Activated CD4-positive, alpha-beta memory T cell treated with anti-CD3 and anti-CD28 coated beads for 36 hours (primary cell): ENCODE measurements at regions of chr4 and their contacts with region 1.

Region 1: GRCh38 chr4:7802093-7802726 is 137.5 kb downstream of the AFAP1 start:
- DNase-seq: peak; percentile 90
- H3K4me3 Mint-ChIP-seq: no peak overlapping the region
- H3K27ac Mint-ChIP-seq: peak overlapping the region; percentile 46
- H3K4me1 Mint-ChIP-seq: peaks cover 25% of the 10 kb centered on the region
- H3K27me3 Mint-ChIP-seq: no peaks in the 10 kb centered on the region

Region 2: GRCh38 chr4:7192252-7193029 is 609.8 kb before region 1 on chr4 and contains the start of gene SORCS2:
- CTCF ChIA-PET with region 1: interaction called, 5 read pairs
- POLR2A ChIA-PET with region 1: no interaction called
- intact Hi-C with region 1: loop called (anchors 5 kb)
- DNase-seq: peak; percentile 60
- H3K4me3 Mint-ChIP-seq: no peak within 1 kb of the TSS
- H3K27ac Mint-ChIP-seq: no peak within 1 kb of the TSS
- H3K4me1 Mint-ChIP-seq: peaks cover 2% of the 10 kb centered on the region
- H3K27me3 Mint-ChIP-seq: peaks cover 55% of the 10 kb centered on the region
- total RNA-seq, gene SORCS2: 0.07 TPM

Region 3: DNA sequence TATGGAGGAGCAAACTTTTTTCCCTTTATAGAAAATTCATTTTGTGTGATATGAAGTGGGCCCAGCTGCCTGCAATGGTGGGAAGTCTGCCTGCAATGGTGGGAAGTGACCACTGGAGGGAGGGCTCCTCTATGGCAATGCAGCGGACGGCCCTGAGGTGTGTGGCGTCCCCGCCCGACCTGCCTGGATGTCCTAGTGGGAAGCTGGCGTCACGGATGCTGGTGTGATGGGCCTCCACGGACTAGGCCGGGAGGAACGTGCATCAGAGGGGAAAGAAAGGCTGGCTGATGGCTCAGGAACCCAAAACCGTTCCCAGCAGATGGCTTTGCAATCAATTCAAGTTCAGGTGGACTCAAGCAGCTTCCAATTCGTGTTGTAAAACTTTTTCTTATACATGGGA is 40.5 kb before region 1 on chr4:
- CTCF ChIA-PET with region 1: interaction called, 104 read pairs
- POLR2A ChIA-PET with region 1: no interaction called
- intact Hi-C with region 1: loop called (anchors 1 kb)
- DNase-seq: peak; percentile 66
- H3K4me3 Mint-ChIP-seq: no peak overlapping the region
- H3K27ac Mint-ChIP-seq: peak overlapping the region; percentile 69
- H3K4me1 Mint-ChIP-seq: peaks cover 30% of the 10 kb centered on the region
- H3K27me3 Mint-ChIP-seq: no peaks in the 10 kb centered on the region

Region 4: GRCh38 chr4:7781366-7781765 is 20.8 kb before region 1 on chr4:
- CTCF ChIA-PET with region 1: interaction called, 11 read pairs
- POLR2A ChIA-PET with region 1: no interaction called
- intact Hi-C with region 1: loop called (anchors 1 kb)
- DNase-seq: peak; percentile 57
- H3K4me3 Mint-ChIP-seq: peak overlapping the region; percentile 15
- H3K27ac Mint-ChIP-seq: peak overlapping the region; percentile 93
- H3K4me1 Mint-ChIP-seq: peaks cover 88% of the 10 kb centered on the region
- H3K27me3 Mint-ChIP-seq: no peaks in the 10 kb centered on the region

Region 5: DNA sequence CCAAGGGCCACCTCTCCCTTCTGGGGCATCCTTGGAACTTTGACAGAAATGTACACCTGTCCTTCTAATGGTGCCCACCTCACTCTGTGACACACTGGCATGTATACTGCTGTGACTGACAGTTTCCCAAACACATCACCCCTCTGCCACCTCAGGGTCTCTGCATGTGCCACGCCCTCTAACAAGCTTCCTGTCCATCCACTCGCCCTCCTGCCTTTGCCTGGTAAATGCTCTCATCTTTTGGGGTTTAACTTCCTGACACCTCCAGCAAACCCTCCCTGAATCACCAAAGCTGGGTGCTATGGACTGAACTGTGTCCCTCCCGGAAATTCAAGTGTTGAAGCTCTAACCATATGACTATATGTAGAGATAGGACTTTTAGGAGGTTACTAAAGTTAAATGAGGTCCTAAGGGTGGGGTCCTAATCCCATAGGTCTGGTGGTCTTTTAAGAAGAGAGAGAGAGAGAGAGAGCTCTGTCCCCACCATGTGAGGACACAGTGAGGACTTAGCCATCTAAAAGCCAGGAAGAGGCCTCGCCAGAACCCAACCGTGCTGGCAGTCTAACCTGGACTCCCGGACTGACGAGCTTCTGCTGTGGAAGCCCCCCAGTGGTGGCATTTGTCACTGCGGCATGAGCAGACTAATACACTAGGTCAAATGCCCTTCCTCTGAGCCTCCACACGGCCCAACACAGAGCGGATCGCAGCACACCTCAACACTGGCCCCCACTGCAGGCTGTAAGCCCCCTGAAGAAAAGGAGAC is 41.8 kb after region 1 on chr4:
- CTCF ChIA-PET with region 1: interaction called, 110 read pairs
- POLR2A ChIA-PET with region 1: no interaction called
- intact Hi-C with region 1: loop called (anchors 2 kb)
- DNase-seq: peak; percentile 79
- H3K4me3 Mint-ChIP-seq: no peak overlapping the region
- H3K27ac Mint-ChIP-seq: peak overlapping the region; percentile 56
- H3K4me1 Mint-ChIP-seq: peaks cover 35% of the 10 kb centered on the region
- H3K27me3 Mint-ChIP-seq: no peaks in the 10 kb centered on the region

Region 6: DNA sequence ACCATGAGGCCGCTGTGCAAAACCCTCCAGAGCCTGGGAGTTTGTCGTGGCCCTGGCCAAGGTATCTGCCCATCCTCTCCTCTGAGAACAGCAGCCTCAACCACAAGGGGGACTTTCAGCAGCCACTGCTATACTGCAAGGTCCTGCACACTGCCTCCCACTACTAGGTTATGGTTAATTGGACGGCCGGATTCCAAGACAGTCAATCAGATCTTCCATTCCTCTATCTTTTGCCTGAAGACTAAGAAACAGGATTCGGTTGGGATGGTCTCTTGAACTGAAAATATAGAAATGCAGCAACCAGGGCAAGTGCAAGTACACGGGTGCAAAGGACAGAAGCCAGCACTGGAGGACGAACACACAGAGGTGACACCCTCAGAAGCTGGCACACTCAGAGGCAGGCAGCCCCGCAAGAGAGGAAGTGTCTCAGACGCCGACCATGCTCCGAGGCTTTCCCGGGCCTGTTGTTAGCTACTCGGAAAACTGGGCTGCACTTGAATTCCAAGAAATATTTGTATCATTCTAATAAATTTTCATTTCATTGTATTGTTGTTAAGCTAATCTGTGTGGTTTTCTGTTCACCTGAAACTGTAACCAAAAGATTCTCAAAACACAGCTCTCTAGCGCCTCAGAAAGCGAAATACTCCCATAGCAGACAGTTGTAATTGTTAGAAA is 74.1 kb after region 1 on chr4:
- CTCF ChIA-PET with region 1: interaction called, 78 read pairs
- POLR2A ChIA-PET with region 1: no interaction called
- intact Hi-C with region 1: loop called (anchors 5 kb)
- DNase-seq: peak; percentile 65
- H3K4me3 Mint-ChIP-seq: peak overlapping the region; percentile 58
- H3K27ac Mint-ChIP-seq: peak overlapping the region; percentile 66
- H3K4me1 Mint-ChIP-seq: peaks cover 62% of the 10 kb centered on the region
- H3K27me3 Mint-ChIP-seq: no peaks in the 10 kb centered on the region

Region 7: DNA sequence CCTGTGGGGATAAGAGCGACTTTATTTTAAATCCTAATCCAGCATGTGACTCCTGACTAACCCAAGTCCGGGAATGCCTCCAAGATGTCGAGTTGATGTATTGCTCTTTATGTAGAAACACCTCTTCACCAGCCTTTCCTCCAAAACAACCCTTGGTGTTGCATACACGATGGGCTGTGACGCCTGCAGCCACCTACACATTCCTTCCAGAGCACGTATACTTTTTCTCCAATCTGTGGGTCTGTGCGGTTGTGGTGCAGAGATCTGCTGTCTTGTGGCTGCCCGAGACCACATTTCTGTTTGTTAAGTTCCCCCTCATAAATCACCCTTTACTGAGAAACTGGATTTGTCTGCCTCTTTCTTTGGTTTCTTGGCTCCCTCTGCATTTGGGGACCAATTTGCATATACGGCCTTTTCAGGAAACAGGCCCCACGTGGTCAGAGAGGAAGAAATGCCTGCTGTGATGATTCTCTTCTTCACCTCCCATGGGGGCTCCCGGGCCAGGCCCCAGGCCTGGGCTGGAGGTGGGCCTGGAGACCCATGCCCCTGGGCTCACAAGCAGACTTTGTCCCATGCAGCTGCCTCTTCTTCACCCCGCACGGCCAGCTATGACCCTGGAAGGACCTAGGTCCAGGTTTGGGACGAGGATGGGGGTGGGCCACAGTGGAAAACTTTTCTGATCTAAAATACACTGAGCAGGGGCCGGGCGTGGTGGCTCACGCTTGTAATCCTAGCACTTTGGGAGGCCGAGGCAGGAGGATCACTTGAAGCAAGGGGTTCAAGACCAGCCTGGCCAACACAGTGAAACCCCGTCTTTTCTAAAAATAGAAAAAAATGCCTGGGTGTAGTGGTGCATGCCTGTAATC is 158.8 kb after region 1 on chr4:
- CTCF ChIA-PET with region 1: interaction called, 15 read pairs
- POLR2A ChIA-PET with region 1: no interaction called
- intact Hi-C with region 1: loop called (anchors 2 kb)
- DNase-seq: peak; percentile 93
- H3K4me3 Mint-ChIP-seq: peak overlapping the region; percentile 38
- H3K27ac Mint-ChIP-seq: peak overlapping the region; percentile 94
- H3K4me1 Mint-ChIP-seq: peaks cover 53% of the 10 kb centered on the region
- H3K27me3 Mint-ChIP-seq: no peaks in the 10 kb centered on the region

Region 8: DNA sequence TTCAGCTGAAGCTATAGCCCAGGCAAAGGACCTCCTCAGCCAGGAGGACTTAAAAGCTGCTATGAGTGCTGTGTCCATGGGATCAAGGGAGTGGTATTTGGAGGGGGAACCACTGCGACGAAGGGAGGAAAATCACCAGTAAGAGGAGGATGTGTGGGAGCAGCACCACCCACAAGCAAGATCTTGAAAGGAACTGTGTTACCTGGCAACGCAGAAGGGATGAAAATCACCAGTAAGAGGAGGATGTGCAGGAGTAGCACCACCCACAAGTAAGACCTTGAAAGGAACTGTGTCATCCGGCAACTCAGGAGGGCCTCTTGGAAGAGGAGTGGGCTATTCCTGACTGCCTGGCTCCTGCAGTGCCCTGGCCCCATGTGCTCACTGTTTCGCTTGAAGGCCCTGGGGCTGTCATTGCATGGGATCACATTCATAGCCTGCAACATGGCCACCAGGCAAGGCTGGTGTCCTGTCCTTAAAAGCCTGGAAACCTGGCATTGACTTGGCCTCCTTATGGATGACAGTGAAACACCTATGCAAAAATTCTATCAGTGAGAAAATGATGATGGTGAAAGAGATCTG is 686.7 kb after region 1 on chr4:
- CTCF ChIA-PET with region 1: no interaction called
- POLR2A ChIA-PET with region 1: no interaction called
- intact Hi-C with region 1: no loop called
- DNase-seq: no peak
- H3K4me3 Mint-ChIP-seq: no peak overlapping the region
- H3K27ac Mint-ChIP-seq: no peak overlapping the region
- H3K4me1 Mint-ChIP-seq: no peaks in the 10 kb centered on the region
- H3K27me3 Mint-ChIP-seq: no peaks in the 10 kb centered on the region